Activated T-helper 1 cell treated with anti-CD3 and anti-CD28 coated beads, Interleukin-12 subunit alpha, Interleukin-12 subunit beta, Interleukin-2, Interleukin-4 antibody, amounts not matched to agents 30 ng/mL and 10 ng/mL and 1 ng/mL, durations not matched to agents 14 hours and 24 hours and 36 hours (primary cell): ENCODE measurements at regions of chr13 and their contacts with region 1.

Region 1: GRCh38 chr13:40485611-40486517 is 180.6 kb downstream of the FOXO1 start:
- DNase-seq: peak; percentile 50
- H3K4me3 Mint-ChIP-seq: peak overlapping the region; percentile 23
- H3K27ac Mint-ChIP-seq: peak overlapping the region; percentile 89
- H3K4me1 Mint-ChIP-seq: peaks cover 68% of the 10 kb centered on the region
- H3K27me3 Mint-ChIP-seq: no peaks in the 10 kb centered on the region

Region 2: DNA sequence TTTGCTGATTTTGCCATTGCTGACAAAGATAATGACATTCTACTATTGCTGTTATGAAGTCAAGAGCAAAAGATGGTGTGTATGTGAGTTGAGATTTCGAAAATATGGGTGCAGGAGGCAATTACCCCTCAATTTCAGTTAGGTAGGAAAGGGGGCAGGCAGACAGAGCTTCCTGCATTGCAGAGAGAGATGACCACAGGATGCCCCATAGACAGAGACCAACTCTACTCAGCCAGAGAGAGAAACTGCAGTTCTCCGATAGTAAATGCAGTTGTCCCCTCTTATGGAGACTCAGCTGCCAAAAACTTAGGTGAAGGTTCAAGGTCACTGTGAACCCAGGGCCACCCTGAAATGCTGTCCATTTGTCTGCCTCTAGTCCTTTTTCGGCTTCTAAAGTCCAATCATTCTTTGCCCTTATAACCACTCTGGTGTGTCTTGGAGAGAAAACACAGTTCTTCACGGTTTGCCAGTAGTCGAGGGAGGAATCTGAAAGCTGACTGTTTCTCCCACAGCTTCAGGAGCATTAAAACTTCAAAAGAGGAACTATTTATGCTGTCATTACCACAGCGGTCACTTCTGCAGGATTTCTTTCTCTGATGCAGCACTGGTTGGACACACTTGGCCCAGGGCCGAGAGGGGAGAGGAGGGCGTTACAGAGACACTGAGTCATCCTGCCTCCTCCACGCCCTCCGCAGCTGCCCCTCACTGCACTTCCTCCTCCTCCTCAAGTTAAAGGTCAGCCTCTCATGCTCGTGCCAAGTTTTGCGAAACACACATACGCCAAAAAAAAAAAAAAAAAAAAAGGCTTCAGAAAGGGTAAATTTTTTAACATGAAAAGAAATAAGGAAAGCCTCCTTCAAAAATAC is 83.7 kb before region 1 on chr13:
- intact Hi-C with region 1: no loop called
- DNase-seq: no peak
- H3K4me3 Mint-ChIP-seq: no peak overlapping the region
- H3K27ac Mint-ChIP-seq: peak overlapping the region; percentile 35
- H3K4me1 Mint-ChIP-seq: peaks cover 22% of the 10 kb centered on the region
- H3K27me3 Mint-ChIP-seq: no peaks in the 10 kb centered on the region

Region 3: DNA sequence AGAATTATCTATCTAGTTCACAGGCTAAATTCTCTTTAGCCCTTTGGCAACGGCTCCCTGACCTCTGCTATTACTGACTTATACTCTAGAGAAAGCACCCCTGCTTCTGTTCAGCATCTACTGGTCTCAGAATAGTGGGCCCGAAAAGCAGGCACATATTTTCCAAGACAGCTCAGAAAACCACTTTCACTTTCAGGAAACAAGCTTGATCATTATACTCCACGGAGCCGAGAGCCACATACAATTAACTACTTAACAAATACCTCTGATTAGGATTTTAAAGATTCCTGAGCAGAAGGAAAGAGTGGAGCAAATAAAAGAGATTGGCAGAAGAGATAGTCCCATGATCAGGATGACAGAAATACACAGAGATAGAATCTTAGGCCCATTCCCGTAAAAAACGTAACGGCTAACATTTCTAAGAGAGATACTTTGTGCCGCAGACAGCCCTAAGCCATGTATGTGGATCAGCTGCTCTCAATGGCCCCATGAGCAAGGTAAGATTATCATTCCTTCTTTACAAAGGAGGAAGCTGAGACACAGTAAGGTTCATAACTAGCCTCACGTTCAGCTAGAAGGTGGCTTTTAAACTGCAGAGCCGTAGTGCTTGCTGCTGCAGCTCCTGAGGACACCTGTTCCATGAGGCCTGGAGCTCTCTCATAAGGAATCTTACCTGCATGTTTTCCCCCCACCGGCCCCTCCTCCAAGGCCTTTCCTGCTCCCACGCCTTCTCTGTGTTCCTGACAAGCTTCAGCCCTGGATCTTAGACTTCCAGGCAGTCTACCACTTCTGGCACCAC is 46.7 kb before region 1 on chr13:
- intact Hi-C with region 1: loop called (anchors 1 kb)
- DNase-seq: no peak
- H3K4me3 Mint-ChIP-seq: peak overlapping the region; percentile 23
- H3K27ac Mint-ChIP-seq: peak overlapping the region; percentile 73
- H3K4me1 Mint-ChIP-seq: peaks cover 33% of the 10 kb centered on the region
- H3K27me3 Mint-ChIP-seq: peaks cover 2% of the 10 kb centered on the region